Caco-2 (cell line): ENCODE measurements at regions of chr12 and their contacts with region 1.

Region 1: GRCh38 chr12:13362260-13362841 is 165.8 kb downstream of the EMP1 start:
- DNase-seq: peak; percentile 85 to 88
- H3K4me3 ChIP-seq: no peak overlapping the region
- H3K4me3 Mint-ChIP-seq: no peak overlapping the region
- H3K27ac Mint-ChIP-seq: no peak overlapping the region
- H3K4me1 ChIP-seq: no peaks in the 10 kb centered on the region
- H3K4me1 Mint-ChIP-seq: no peaks in the 10 kb centered on the region
- H3K27me3 ChIP-seq: no peaks in the 10 kb centered on the region
- H3K27me3 Mint-ChIP-seq: peaks cover 20% of the 10 kb centered on the region
- CTCF ChIP-seq: peak; percentile 93 to 96

Region 2: DNA sequence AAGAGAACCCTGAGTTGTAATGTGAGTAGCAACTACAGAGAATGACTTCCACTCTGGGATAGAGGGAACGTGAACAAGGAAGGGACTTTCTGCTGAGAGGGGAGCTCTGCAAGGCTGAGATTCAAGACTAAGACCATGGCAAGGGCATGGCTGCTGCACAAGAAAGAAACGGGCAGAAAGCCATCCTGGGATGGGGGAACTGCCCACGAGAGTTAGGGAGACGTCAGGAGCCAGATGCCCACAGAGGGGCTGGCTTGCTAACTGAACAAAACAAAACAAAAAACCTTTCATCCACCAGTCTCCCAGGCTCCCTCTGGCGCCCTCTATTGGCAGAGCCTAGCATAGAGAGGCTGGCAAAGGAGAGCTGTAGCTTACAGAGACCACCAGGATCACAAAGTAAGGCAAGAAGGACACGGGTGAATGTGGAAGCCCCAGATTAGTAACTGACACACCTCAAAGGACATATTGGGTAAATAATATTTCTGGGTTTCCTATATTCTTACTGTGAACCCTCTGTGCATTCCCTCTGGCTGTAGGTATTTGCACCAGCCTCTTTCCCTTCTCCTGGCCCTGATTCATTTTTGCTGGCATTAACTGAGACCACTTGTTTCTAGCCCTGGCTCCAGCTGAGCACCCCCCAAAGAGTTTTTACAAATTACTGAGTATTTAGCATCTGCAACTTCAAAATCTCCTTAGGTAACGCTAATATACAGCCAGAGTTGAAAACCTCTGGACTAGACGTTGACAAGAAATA is 172.5 kb after region 1 on chr12:
- CTCF ChIA-PET with region 1: interaction called, 23 read pairs
- POLR2A ChIA-PET with region 1: no interaction called
- intact Hi-C with region 1: loop called (anchors 1 kb)
- DNase-seq: peak; percentile 82 to 88
- H3K4me3 ChIP-seq: no peak overlapping the region
- H3K4me3 Mint-ChIP-seq: no peak overlapping the region
- H3K27ac Mint-ChIP-seq: no peak overlapping the region
- H3K4me1 ChIP-seq: no peaks in the 10 kb centered on the region; the same call in 1 of the 2 replicates
- H3K4me1 Mint-ChIP-seq: no peaks in the 10 kb centered on the region
- H3K27me3 ChIP-seq: no peaks in the 10 kb centered on the region
- H3K27me3 Mint-ChIP-seq: peaks cover under 1% of the 10 kb centered on the region
- CTCF ChIP-seq: peak; percentile 96

Region 3: GRCh38 chr12:13661005-13661887 is 298.9 kb after region 1 on chr12:
- CTCF ChIA-PET with region 1: interaction called, 13 read pairs
- POLR2A ChIA-PET with region 1: no interaction called
- intact Hi-C with region 1: loop called (anchors 1 kb)
- DNase-seq: peak; percentile 60 to 67
- H3K4me3 ChIP-seq: no peak overlapping the region
- H3K4me3 Mint-ChIP-seq: no peak overlapping the region
- H3K27ac Mint-ChIP-seq: no peak overlapping the region
- H3K4me1 ChIP-seq: no peaks in the 10 kb centered on the region
- H3K4me1 Mint-ChIP-seq: no peaks in the 10 kb centered on the region
- H3K27me3 ChIP-seq: no peaks in the 10 kb centered on the region
- H3K27me3 Mint-ChIP-seq: no peaks in the 10 kb centered on the region
- CTCF ChIP-seq: peak; percentile 94 to 97